CD4-positive, alpha-beta T cell (primary cell): ENCODE measurements at regions of chr7 and their contacts with region 1.

Region 1: DNA sequence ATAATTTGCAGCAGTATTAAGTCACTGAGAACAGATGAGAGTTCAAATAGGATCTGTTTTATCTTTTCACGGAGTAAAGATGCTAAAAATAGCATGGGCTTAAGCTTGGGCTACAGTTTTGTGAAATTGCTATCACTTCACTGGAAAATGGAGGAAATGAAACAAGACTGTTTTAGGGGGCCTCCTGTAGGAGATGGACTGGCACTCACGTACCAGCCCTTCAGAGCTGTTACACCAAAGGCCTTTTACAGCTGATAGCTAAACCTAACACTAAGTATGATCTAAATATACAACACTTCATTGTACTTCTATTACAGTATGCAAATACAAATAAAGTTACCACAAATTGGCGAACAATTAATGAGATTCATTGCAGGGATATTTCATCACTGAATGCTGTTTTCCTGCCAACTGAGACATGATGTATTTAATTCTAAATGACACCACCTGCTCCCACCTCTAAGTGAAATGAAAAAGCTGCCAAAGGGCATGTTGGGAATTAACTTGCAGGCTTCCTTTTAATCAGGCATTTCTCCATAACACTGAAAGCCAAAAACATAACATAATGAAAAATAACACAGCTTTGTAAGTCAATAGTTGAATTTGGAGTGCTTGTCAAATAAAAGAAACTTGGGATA is 304.5 kb upstream of the LRRN3 start:
- DNase-seq: no peak
- ATAC-seq: no peak
- H3K4me3 ChIP-seq: no peak overlapping the region
- H3K4me3 Mint-ChIP-seq: no peak overlapping the region
- H3K27ac ChIP-seq: no peak overlapping the region
- H3K27ac Mint-ChIP-seq: no peak overlapping the region
- H3K4me1 ChIP-seq: no peaks in the 10 kb centered on the region
- H3K4me1 Mint-ChIP-seq: no peaks in the 10 kb centered on the region
- H3K27me3 ChIP-seq: no peaks in the 10 kb centered on the region
- H3K27me3 Mint-ChIP-seq: no peaks in the 10 kb centered on the region
- CTCF ChIP-seq: no peak

Region 2: DNA sequence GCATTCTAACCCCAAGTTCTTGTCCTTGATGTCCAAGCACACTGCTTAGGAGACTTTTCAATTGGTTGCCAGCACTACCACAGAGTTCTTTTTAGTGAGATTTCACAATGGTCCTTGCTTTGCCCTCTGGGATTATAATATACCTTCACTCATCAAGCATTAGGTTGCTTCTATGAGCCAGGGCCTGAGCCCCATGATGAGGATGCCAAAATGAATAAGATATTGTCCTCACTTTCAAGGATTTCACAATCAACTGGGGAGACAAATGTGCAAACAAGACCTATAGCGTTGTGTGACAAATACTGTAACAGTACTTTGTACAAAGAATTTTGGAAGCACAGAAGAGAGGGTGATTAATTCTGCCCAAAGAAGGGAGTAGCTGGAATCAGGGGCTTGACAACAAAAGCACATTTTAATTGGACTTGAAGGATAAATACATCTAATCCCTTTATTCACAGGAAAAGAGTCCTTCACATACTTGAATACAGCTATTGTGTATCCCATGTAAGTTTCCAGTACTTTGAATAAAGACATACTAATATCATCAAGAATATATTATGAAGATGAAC is 40.9 kb after region 1 on chr7:
- CTCF ChIA-PET with region 1: no interaction called
- POLR2A ChIA-PET with region 1: no interaction called
- intact Hi-C with region 1: loop called in 1 of 2 experiments (anchors 5 kb)
- DNase-seq: no peak
- ATAC-seq: no peak
- H3K4me3 ChIP-seq: no peak overlapping the region
- H3K4me3 Mint-ChIP-seq: no peak overlapping the region
- H3K27ac ChIP-seq: no peak overlapping the region
- H3K27ac Mint-ChIP-seq: no peak overlapping the region
- H3K4me1 ChIP-seq: no peaks in the 10 kb centered on the region
- H3K4me1 Mint-ChIP-seq: peaks cover 6% of the 10 kb centered on the region
- H3K27me3 ChIP-seq: no peaks in the 10 kb centered on the region
- H3K27me3 Mint-ChIP-seq: no peaks in the 10 kb centered on the region
- CTCF ChIP-seq: no peak